K562 (cell line): ENCODE measurements at regions of chr18 and their contacts with region 1.

Region 1: DNA sequence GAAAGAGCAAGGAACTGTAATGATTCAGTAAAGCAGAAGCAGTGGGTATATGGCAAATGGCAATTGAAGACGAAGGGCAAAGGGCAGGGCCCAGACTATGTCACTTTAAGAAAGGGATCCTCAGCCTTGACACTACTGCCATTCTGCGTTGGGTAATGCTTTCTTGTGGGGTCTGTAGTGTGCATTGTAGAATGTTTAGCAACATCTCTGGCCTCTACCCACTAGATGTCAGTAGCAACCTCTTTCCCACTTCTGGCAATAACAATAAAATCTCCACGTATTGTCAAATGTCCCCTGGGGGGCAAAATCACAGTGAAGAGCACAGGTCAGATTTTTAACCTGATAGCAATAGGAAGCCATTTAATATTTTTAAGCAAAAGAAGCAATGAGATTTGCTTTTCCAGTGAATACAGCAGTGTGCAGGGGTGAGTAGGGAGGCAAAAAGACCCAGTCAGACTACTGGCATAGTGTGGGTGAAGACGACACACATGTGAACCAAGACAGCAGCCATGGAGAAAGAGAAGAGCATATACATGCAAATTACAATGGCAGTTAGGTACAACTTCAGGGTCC is 209.5 kb downstream of the DYM start:
- DNase-seq: peak in 1 of 4 experiments; percentile 8
- ATAC-seq: peak; percentile 65
- H3K4me3 ChIP-seq: no peak overlapping the region
- H3K27ac ChIP-seq: no peak overlapping the region
- H3K4me1 ChIP-seq: no peaks in the 10 kb centered on the region
- H3K27me3 ChIP-seq: no peaks in the 10 kb centered on the region
- CTCF ChIP-seq: peak; percentile 39 to 54 (median 40); a peak in 4 of 6 replicates
- EP300 ChIP-seq: no peak
- POLR2A ChIP-seq: no peak
- RAD21 ChIP-seq: peak; percentile 36 to 73

Region 2: DNA sequence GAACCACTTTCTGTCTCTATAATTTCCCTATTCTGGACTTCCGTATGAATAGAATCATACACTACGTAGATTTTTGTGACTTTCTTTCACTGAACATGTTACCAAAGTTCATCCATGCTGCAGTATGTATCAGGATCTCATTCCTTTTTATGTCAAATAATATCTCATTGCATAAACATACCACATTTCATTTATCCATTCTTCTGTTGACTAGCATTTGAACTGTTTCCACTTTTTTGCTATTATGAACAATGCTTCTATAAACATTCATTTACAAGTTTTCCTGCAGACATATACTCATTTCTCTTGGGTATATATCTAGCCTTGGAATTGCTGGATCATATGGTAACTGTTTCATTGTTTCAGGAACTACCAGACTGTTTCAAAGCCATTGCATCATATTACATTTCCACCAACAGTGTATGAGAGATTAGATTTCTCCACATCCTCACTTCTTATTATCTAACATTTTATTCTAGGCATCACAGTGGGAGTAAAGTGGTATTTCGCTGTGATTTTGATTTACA is 23.3 kb after region 1 on chr18:
- CTCF ChIA-PET with region 1: no interaction called
- POLR2A ChIA-PET with region 1: no interaction called
- in situ Hi-C with region 1: no loop called
- intact Hi-C with region 1: no loop called
- DNase-seq: peak in 1 of 4 experiments; percentile 6
- ATAC-seq: peak; percentile 93
- H3K4me3 ChIP-seq: no peak overlapping the region
- H3K27ac ChIP-seq: no peak overlapping the region
- H3K4me1 ChIP-seq: no peaks in the 10 kb centered on the region; a peak in 2 of 5 replicates
- H3K27me3 ChIP-seq: no peaks in the 10 kb centered on the region
- CTCF ChIP-seq: no peak
- EP300 ChIP-seq: peak; percentile 93
- POLR2A ChIP-seq: no peak
- RAD21 ChIP-seq: no peak

Region 3: GRCh38 chr18:49335677-49336076 is 84.8 kb after region 1 on chr18:
- CTCF ChIA-PET with region 1: no interaction called
- POLR2A ChIA-PET with region 1: no interaction called
- in situ Hi-C with region 1: no loop called
- intact Hi-C with region 1: loop called (anchors 2 kb)
- DNase-seq: peak in 1 of 4 experiments; percentile 21
- ATAC-seq: peak; percentile 64; the same call in 2 of the 3 replicates
- H3K4me3 ChIP-seq: no peak overlapping the region
- H3K27ac ChIP-seq: no peak overlapping the region
- H3K4me1 ChIP-seq: no peaks in the 10 kb centered on the region
- H3K27me3 ChIP-seq: no peaks in the 10 kb centered on the region
- CTCF ChIP-seq: peak in 2 of 3 experiments; percentile 25 to 41; a peak in 2 of 6 replicates
- EP300 ChIP-seq: no peak
- POLR2A ChIP-seq: no peak
- RAD21 ChIP-seq: peak in 1 of 2 experiments; percentile 34; a peak in 2 of 4 replicates

Region 4: GRCh38 chr18:49412679-49413078 is 161.8 kb after region 1 on chr18:
- CTCF ChIA-PET with region 1: no interaction called
- POLR2A ChIA-PET with region 1: no interaction called
- in situ Hi-C with region 1: no loop called
- intact Hi-C with region 1: loop called (anchors 2 kb)
- DNase-seq: no peak
- ATAC-seq: no peak
- H3K4me3 ChIP-seq: no peak overlapping the region
- H3K27ac ChIP-seq: no peak overlapping the region
- H3K4me1 ChIP-seq: no peaks in the 10 kb centered on the region
- H3K27me3 ChIP-seq: no peaks in the 10 kb centered on the region
- CTCF ChIP-seq: no peak
- EP300 ChIP-seq: no peak
- POLR2A ChIP-seq: no peak
- RAD21 ChIP-seq: no peak